Activated CD4-positive, alpha-beta memory T cell treated with anti-CD3 and anti-CD28 coated beads for 36 hours (primary cell): ENCODE measurements at regions of chr10 and their contacts with region 1.

Region 1: DNA sequence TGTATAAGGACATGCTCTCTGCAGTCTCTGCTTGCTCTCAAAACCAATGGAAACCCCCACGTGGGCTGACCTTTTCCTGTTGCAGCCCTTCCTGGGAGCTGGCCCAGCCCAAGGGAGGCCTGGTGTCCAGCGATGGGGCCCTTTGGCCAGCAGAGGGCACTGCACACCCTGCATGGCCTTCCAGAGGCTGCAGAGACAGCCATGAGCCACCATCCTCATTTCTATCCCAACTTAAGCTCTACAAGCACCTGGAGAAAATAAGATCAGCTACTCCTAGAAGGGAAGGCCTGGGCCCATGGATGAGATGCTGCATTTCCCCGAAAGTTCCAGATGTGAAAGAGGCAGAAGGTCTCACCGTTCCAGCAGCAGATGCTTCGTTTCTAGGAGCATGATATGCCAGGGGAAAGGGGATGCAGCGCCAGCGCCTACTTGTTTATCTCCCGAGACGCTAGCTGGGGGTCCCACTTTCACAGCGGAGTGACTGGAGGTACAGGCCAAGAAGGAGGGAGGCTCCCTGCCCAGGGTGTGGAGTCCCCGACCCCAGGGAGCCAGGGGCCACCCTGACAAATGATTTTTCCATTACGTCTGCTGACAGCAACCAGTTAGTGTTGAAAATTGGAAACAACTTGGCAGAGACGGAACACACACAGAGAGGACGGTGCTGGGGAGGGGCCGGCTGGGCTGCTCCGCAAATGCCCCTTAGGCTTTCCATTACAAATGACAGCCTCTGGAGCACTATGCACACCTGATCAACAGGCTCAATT is 106.4 kb downstream of the ZRANB1 start:
- DNase-seq: peak; percentile 77
- H3K4me3 Mint-ChIP-seq: no peak overlapping the region
- H3K27ac Mint-ChIP-seq: no peak overlapping the region
- H3K4me1 Mint-ChIP-seq: no peaks in the 10 kb centered on the region
- H3K27me3 Mint-ChIP-seq: no peaks in the 10 kb centered on the region

Region 2: GRCh38 chr10:124975977-124976514 is 72.2 kb before region 1 on chr10:
- CTCF ChIA-PET with region 1: no interaction called
- POLR2A ChIA-PET with region 1: no interaction called
- intact Hi-C with region 1: no loop called
- DNase-seq: no peak
- H3K4me3 Mint-ChIP-seq: no peak overlapping the region
- H3K27ac Mint-ChIP-seq: no peak overlapping the region
- H3K4me1 Mint-ChIP-seq: peaks cover 14% of the 10 kb centered on the region
- H3K27me3 Mint-ChIP-seq: no peaks in the 10 kb centered on the region

Region 3: DNA sequence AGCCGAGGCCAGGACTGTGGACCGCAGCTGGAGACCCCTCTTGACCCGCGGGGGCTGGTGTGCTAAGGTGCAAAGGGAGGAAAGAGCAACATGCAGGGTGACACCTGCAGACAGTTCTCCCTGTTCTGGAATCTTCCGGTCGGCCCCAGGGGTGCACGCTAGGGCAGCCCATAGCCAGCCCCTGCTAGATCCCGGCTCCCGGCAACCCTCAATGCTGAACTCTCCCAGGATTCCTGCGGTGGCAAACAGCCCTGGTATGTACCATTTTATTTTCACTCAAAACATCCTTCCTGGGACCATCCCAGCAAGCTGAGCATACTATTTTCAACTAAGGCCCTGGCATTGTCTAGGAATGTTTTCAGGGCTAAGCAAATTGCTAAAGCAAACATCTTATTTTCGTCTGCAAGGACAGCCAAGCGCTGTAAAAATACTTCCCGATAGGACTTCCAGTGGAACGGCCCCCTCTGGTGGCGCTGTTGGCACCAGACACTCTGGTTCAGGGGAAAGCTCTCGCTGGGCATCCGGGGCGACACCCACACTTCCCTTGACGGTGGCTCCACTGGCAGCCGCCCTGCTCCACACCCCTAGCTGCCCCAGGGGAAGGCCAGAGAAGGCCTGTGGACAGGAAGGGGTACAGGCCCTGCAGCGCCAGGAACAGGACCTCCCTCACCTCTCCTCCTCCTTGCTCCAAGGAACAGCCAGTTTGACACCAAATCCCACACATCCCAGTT is 12.7 kb after region 1 on chr10:
- CTCF ChIA-PET with region 1: interaction called, 48 read pairs
- POLR2A ChIA-PET with region 1: no interaction called
- intact Hi-C with region 1: no loop called
- DNase-seq: peak; percentile 64
- H3K4me3 Mint-ChIP-seq: no peak overlapping the region
- H3K27ac Mint-ChIP-seq: no peak overlapping the region
- H3K4me1 Mint-ChIP-seq: peaks cover 15% of the 10 kb centered on the region
- H3K27me3 Mint-ChIP-seq: peaks cover 45% of the 10 kb centered on the region

Region 4: GRCh38 chr10:125102231-125102630 is 53.9 kb after region 1 on chr10:
- CTCF ChIA-PET with region 1: no interaction called
- POLR2A ChIA-PET with region 1: no interaction called
- intact Hi-C with region 1: no loop called
- DNase-seq: no peak
- H3K4me3 Mint-ChIP-seq: no peak overlapping the region
- H3K27ac Mint-ChIP-seq: no peak overlapping the region
- H3K4me1 Mint-ChIP-seq: no peaks in the 10 kb centered on the region
- H3K27me3 Mint-ChIP-seq: peaks cover 3% of the 10 kb centered on the region

Region 5: GRCh38 chr10:125160856-125161706 is 112.8 kb after region 1 on chr10:
- CTCF ChIA-PET with region 1: no interaction called
- POLR2A ChIA-PET with region 1: no interaction called
- intact Hi-C with region 1: no loop called
- DNase-seq: peak; percentile 29
- H3K4me3 Mint-ChIP-seq: peak overlapping the region; percentile 49
- H3K27ac Mint-ChIP-seq: no peak overlapping the region
- H3K4me1 Mint-ChIP-seq: peaks cover 5% of the 10 kb centered on the region
- H3K27me3 Mint-ChIP-seq: peaks cover 34% of the 10 kb centered on the region

Region 6: DNA sequence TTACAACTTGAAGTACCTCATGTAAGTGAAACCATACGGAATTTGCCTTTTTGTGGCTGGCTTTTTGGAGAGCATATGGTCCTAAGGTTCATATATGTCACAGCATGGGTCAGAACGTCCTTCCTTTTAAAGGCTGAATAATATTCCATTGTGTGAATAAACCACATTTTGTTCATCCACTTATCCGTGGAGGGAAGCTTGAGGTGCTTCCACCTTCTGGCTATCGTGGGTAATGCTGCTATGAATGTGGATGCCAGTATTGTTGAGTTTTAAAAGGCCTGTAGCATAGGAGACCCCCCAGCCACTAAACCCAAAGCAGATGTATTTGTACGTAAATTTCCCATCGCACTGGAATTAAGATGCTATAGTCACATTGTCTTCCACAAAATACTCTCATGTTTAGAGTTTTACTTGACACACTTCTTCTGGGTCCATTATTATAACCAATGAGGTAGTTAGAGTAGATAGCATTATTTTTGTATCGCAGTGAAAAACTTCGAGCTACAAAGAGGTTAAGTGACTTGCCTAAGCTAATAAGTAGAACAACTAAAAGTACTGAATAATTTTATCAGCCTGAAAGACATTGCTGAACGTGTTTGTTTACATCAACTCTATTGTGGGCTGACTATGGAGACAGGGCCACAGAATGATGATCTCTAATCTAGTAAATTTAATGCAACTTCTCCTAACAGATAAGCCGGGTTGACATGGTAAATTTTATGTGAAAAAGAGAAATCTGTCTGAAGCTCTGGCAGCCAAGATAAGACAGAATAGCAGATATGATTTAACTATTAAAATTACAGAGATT is 295.0 kb after region 1 on chr10:
- CTCF ChIA-PET with region 1: interaction called, 4 read pairs
- POLR2A ChIA-PET with region 1: no interaction called
- intact Hi-C with region 1: loop called (anchors 2 kb)
- DNase-seq: no peak
- H3K4me3 Mint-ChIP-seq: no peak overlapping the region
- H3K27ac Mint-ChIP-seq: no peak overlapping the region
- H3K4me1 Mint-ChIP-seq: no peaks in the 10 kb centered on the region
- H3K27me3 Mint-ChIP-seq: peaks cover 3% of the 10 kb centered on the region